AG04450 (cell line): ENCODE measurements at regions of chr11 and their contacts with region 1.

Region 1: GRCh38 chr11:13343931-13344717 is 66.5 kb downstream of the BMAL1 start:
- DNase-seq: peak; percentile 47
- H3K4me3 ChIP-seq: no peak overlapping the region
- H3K27ac ChIP-seq: no peak overlapping the region
- H3K27me3 ChIP-seq: no peaks in the 10 kb centered on the region
- CTCF ChIP-seq: peak; percentile 88

Region 2: DNA sequence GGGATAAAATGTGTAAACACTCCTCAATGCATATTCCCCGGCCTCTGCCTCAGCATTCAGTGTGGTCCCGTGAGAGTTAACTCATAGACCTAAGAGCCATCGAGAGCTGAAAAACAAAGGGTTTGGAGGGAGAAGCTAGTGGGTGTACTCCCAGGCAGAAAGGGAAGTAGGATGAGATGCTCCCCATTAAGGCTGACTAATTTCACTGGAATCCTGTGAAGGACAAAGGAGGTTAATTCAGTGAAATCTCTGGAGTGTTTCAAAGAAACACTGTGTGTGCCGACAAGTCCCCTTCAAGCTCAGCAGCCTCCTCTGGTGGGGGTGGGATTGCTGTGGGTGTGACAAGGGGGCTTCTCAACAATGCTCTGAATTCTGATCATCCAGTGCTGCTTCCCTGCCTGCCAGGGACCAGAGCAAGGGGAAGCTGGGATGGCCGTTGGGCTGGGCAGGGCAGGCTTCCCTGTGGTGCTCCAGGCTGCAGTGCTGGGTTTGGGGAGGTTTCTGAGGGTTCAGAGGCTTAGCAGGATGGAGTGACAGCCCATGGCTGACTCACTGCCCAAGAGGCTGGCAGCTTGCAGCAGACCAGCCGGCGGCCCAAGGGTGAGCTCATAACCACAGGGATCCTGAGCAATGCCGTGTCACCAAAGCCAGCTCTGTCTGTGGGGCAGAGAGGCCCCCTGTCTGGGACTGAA is 128.0 kb before region 1 on chr11:
- CTCF ChIA-PET with region 1: interaction called, 148 read pairs
- POLR2A ChIA-PET with region 1: interaction called, 19 read pairs
- DNase-seq: peak; percentile 87
- H3K4me3 ChIP-seq: peak overlapping the region; percentile 23; the same call in 1 of the 2 replicates
- H3K27ac ChIP-seq: peak overlapping the region; percentile 100
- H3K27me3 ChIP-seq: no peaks in the 10 kb centered on the region
- CTCF ChIP-seq: no peak

Region 3: DNA sequence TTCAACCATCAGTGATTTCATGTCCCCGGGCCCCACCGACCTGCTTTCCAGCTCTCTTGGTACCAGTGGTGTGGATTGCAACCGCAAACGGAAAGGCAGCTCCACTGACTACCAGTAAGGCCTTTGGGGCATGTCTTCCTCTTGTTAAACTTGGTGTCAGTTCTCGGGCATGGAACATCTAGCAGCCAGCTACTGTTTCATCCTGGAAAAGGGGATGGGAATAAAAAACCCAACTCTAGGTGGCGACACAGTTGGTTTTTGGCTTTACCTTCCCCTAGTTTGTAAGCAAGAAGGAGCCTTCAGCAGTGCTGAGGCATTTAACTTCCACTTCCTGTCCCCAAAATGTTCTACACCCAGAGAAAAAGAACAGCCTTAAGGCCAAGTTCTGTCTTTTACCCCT is 10.2 kb after region 1 on chr11:
- CTCF ChIA-PET with region 1: interaction called, 23 read pairs
- POLR2A ChIA-PET with region 1: no interaction called
- DNase-seq: no peak
- H3K4me3 ChIP-seq: no peak overlapping the region
- H3K27ac ChIP-seq: no peak overlapping the region
- H3K27me3 ChIP-seq: no peaks in the 10 kb centered on the region
- CTCF ChIP-seq: peak; percentile 40

Region 4: GRCh38 chr11:13861411-13861810 is 517.3 kb after region 1 on chr11:
- CTCF ChIA-PET with region 1: no interaction called
- POLR2A ChIA-PET with region 1: no interaction called
- DNase-seq: no peak
- H3K4me3 ChIP-seq: no peak overlapping the region
- H3K27ac ChIP-seq: no peak overlapping the region
- H3K27me3 ChIP-seq: no peaks in the 10 kb centered on the region
- CTCF ChIP-seq: no peak

Region 5: DNA sequence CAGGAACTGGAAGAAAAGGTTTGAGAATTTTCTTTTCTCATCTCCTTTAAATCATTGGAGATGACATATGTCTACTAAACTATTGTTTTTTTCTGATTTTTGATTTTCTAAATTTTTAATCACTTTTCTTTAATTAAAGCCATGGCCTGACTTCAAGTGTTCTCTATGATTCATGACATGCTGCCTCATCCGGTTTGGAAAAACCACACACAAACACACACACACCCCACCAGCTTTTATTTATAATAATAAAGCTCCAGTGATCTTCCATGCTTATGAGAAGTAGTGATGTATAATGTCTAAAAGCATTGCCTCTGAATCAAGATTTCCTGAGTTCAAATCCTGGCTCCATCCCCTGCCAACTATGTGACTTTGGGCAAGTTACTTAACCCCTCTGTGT is 797.6 kb after region 1 on chr11:
- CTCF ChIA-PET with region 1: no interaction called
- POLR2A ChIA-PET with region 1: no interaction called
- DNase-seq: no peak
- H3K4me3 ChIP-seq: no peak overlapping the region
- H3K27ac ChIP-seq: no peak overlapping the region
- H3K27me3 ChIP-seq: no peaks in the 10 kb centered on the region
- CTCF ChIP-seq: no peak